ENCODE measurements at regions of chrX and their contacts with region 1.

Region 1: DNA sequence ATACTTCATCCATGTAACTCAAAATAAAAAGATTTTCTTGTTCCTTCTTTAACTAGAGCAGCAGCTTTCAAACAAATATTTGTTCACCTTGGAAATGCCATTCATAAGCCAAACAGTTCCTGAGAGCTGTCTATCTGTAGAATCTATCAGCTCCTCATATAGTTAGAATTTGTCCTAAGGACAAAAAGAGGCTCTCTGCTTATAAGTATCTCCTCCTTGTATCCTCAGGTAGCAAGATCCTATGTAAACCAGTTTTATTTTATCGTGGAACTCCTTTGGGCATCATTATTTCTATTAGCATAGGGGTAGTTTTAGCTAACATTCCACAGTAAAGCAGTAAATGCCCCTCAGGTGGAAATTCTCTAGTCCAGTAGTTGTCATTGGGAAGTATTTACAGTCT is 49.3 kb upstream of the PWWP3B start:
- DNase-seq: no peak
- H3K4me3 ChIP-seq: no peak overlapping the region
- H3K27ac ChIP-seq: no peak overlapping the region
- H3K4me1 ChIP-seq: no peaks in the 10 kb centered on the region
- H3K27me3 ChIP-seq: peaks cover 0 to 24% of the 10 kb centered on the region in 2 donors
- CTCF ChIP-seq: no peak
- POLR2A ChIP-seq: no peak

Region 2: GRCh38 chrX:104469771-104470170 is 1649.0 kb before region 1 on chrX:
- intact Hi-C with region 1: no loop called
- DNase-seq: no peak
- H3K4me3 ChIP-seq: no peak overlapping the region
- H3K27ac ChIP-seq: no peak overlapping the region
- H3K4me1 ChIP-seq: no peaks in the 10 kb centered on the region
- H3K27me3 ChIP-seq: peaks cover 0 to 20% of the 10 kb centered on the region in 2 donors
- CTCF ChIP-seq: no peak
- POLR2A ChIP-seq: no peak

Region 3: DNA sequence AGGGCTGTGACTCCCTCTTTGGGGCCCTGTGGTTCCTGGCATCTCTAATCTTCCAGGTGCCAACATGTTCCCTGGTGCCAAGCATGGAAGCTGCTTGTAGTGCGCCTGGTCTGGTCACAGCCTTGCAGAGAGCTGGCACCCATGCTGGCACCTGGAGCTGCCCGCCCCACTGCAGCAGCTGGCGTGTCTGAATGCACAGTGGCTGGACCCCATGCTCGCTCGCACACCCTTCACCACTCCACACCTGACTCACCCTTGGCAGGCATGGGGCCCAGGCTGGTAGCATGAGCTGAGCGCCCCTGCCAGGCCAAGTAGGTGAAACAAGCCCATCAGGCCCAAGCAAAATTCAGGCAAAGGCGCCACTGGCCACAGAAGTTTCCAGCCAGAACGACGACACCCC is 1206.7 kb after region 1 on chrX:
- intact Hi-C with region 1: loop called (anchors 10 kb)
- DNase-seq: no peak
- H3K4me3 ChIP-seq: no peak overlapping the region
- H3K27ac ChIP-seq: no peak overlapping the region
- H3K4me1 ChIP-seq: no peaks in the 10 kb centered on the region
- H3K27me3 ChIP-seq: peaks cover 0 to 77% of the 10 kb centered on the region in 2 donors
- CTCF ChIP-seq: no peak
- POLR2A ChIP-seq: no peak

Measured in breast epithelium (tissue), 4 donors.